Mucosa of descending colon (tissue), 3 donors: ENCODE measurements at regions of chr6 and their contacts with region 1.

Region 1: DNA sequence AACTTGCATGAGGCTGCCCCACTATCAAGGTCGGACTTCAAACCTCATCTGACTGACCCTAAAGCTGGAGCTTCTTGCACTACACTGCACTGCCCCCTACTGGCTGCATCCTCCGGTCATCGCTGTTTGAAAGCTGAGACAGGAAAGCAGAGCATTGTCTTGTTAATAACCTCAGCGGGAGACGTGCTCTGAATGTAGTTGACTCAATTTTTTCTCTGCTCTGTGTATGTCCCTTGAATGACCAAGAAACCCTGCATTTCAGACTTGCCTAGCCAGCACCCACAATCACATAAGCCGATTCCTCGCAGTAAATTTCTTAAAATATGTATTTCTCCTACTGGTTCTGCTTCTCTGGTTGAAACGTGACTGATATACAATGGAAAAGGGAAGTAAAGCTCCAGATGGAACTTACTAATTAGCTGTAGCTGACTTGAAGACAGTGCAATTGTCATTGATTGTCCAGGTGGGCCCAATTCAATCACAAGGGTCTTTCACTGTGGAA is 27.8 kb downstream of the TCF21 start:
- DNase-seq: peak; percentile 74 to 97 (median 87)
- ATAC-seq: peak; percentile 83
- H3K4me3 ChIP-seq: no peak overlapping the region
- H3K4me1 ChIP-seq: no peaks in the 10 kb centered on the region
- CTCF ChIP-seq: peak; percentile 52

Region 2: DNA sequence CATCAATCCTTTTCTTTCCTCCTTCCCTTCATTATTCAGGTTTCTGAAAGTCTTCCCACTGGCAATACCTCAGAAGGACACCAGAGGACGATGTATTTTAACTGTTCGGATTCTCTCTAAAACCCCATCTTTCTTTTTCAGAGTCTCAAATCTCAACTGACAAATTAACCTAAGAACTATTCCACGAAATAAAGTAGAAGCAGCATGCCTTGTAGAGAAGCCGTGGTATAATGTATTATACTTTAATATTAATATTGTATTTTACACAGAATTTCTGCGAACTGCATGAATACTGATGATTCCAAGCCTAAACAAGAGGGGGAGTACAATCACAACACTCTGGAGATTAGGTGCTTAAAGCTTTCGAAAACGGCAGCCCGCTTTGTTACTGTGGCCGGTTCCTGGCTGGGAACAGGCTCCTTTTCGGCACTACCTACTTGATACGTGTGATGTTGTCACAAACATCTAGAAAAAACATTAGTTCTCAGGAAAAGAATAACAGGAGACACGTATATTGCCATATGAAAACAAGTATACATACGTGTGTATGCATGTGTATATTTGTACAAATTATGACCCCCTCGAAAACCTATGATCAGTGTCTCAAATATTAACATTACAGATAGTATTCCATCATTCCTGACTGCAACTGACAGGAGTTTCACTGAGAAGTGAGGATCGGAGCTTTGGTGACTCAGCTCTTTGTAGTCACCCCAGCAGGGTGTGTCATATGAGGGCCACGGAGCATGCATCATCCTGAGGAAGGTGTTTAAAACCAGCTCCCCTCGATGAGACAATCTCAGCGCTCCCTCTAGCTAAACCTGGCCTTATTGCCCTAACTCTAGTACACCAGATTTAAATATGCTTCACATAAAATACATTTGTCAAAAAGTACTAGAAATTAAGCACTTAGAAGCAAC is 347.5 kb before region 1 on chr6:
- intact Hi-C with region 1: loop called in 1 of 2 experiments (anchors 10 kb)
- DNase-seq: peak in 1 of 3 donors; percentile 21
- ATAC-seq: peak; percentile 57
- H3K4me3 ChIP-seq: no peak overlapping the region
- H3K4me1 ChIP-seq: no peaks in the 10 kb centered on the region
- CTCF ChIP-seq: peak; percentile 21

Region 3: GRCh38 chr6:133841176-133841575 is 75.5 kb before region 1 on chr6:
- intact Hi-C with region 1: loop called in 1 of 2 experiments (anchors 10 kb)
- DNase-seq: no peak
- ATAC-seq: no peak
- H3K4me3 ChIP-seq: no peak overlapping the region
- H3K4me1 ChIP-seq: no peaks in the 10 kb centered on the region
- CTCF ChIP-seq: no peak

Region 4: GRCh38 chr6:133977983-133978895 is 61.5 kb after region 1 on chr6:
- intact Hi-C with region 1: no loop called
- DNase-seq: no peak
- ATAC-seq: peak; percentile 63
- H3K4me3 ChIP-seq: no peak overlapping the region
- H3K4me1 ChIP-seq: peaks cover 5% of the 10 kb centered on the region
- CTCF ChIP-seq: no peak

Region 5: DNA sequence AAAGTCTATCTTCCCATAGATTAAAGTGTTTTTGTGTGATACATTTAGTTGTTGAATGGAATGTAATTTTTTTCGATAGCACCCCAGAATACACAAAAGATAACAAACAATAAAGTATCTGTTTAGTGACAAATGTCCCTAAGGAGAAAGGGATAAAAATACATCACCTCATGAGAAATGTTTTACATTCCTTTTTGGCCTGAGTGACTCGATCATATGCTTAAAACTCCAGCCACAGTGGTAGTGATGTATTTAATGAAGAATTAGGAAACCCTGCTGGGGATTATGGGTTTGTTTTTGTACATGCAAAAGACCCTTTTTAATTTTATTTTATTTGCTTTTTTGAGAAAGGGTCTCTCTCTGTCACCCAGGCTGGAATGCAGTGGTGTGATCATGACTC is 405.5 kb after region 1 on chr6:
- intact Hi-C with region 1: no loop called
- DNase-seq: no peak
- ATAC-seq: no peak
- H3K4me3 ChIP-seq: no peak overlapping the region
- H3K4me1 ChIP-seq: no peaks in the 10 kb centered on the region
- CTCF ChIP-seq: no peak

Region 6: DNA sequence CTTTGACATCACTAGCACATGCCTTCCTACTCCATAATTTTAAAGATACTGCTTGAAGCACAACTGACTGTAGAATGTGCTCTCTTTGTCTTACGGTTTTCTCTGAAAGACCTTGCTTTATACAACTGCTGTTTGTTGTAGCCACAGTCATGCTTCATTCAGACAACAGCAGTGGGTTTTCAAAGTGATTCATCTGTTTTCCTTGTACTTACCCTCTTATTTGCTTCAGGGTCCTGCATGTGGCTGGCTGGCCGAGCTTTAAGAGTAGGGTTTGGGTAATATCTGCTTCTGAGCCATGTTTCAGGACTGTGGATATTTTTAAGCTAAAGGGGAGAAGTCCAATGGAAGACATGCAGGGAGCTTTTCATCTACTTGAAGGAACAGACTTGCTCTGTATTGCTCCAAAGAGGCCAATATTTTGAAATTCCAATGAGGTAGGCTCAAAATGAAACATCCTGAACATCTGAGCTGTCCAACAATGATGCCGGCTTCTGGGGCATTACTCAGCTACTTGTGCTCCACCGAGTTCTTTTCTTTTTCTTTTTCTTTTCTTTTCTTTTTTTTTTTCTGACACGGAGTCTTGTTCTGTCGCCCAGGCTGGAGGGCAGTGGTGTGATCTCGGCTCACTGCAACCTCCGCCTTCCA is 561.4 kb after region 1 on chr6:
- intact Hi-C with region 1: no loop called
- DNase-seq: no peak
- ATAC-seq: no peak
- H3K4me3 ChIP-seq: no peak overlapping the region
- H3K4me1 ChIP-seq: no peaks in the 10 kb centered on the region
- CTCF ChIP-seq: no peak